T-cell (primary cell): ENCODE measurements at regions of chr5 and their contacts with region 1.

Region 1: DNA sequence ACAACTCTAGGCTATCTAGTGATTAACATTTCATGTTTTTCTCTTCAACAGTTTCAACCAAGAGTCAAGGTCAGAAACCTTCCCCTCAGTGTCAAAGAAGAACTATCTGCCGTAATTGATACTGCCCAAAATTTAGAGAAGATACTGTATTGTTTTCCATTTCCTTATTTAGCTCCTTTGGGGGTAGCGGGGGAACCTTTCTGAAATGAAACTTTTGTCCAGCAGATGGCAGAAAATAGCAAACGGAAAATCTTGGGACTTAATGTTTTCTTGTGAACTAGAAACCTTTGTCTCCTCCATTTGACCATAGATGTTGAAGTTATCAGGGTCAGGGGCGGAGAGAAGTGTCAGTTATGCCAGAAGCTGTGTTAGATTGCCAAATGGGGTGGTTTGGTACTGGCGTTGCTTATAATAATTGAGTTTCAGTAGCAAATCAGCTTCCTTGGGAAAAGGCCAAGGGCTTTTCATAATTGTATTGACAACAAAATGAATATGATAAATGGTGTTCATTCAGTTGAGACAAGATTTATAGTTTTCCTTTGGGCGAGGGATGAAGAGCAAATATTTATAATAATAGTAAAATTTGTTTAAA is 101.7 kb upstream of the TLX3 start:
- DNase-seq: peak in 5 of 35 experiments; percentile 1 to 50 (median 5)
- ATAC-seq: no peak
- H3K4me3 ChIP-seq: no peak overlapping the region
- H3K4me3 Mint-ChIP-seq: no peak overlapping the region
- H3K27ac ChIP-seq: no peak overlapping the region
- H3K27ac Mint-ChIP-seq: no peak overlapping the region
- H3K4me1 ChIP-seq: no peaks in the 10 kb centered on the region
- H3K4me1 Mint-ChIP-seq: no peaks in the 10 kb centered on the region
- H3K27me3 ChIP-seq: peaks cover 0 to 2% of the 10 kb centered on the region in 2 experiments
- H3K27me3 Mint-ChIP-seq: peaks cover 0 to 8% of the 10 kb centered on the region in 2 donors

Region 2: GRCh38 chr5:171342362-171343111 is 135.2 kb after region 1 on chr5:
- CTCF ChIA-PET with region 1: interaction called, 5 to 12 read pairs
- POLR2A ChIA-PET with region 1: no interaction called
- DNase-seq: peak in 19 of 35 experiments; percentile 1 to 61 (median 12)
- ATAC-seq: peak in 1 of 4 experiments; percentile 30
- H3K4me3 ChIP-seq: no peak overlapping the region
- H3K4me3 Mint-ChIP-seq: no peak overlapping the region
- H3K27ac ChIP-seq: no peak overlapping the region
- H3K27ac Mint-ChIP-seq: no peak overlapping the region
- H3K4me1 ChIP-seq: no peaks in the 10 kb centered on the region
- H3K4me1 Mint-ChIP-seq: no peaks in the 10 kb centered on the region
- H3K27me3 ChIP-seq: peaks cover 5 to 12% of the 10 kb centered on the region in 2 experiments
- H3K27me3 Mint-ChIP-seq: peaks cover 9 to 15% of the 10 kb centered on the region in 2 donors